ENCODE measurements at regions of chr2 and their contacts with region 1.

Region 1: DNA sequence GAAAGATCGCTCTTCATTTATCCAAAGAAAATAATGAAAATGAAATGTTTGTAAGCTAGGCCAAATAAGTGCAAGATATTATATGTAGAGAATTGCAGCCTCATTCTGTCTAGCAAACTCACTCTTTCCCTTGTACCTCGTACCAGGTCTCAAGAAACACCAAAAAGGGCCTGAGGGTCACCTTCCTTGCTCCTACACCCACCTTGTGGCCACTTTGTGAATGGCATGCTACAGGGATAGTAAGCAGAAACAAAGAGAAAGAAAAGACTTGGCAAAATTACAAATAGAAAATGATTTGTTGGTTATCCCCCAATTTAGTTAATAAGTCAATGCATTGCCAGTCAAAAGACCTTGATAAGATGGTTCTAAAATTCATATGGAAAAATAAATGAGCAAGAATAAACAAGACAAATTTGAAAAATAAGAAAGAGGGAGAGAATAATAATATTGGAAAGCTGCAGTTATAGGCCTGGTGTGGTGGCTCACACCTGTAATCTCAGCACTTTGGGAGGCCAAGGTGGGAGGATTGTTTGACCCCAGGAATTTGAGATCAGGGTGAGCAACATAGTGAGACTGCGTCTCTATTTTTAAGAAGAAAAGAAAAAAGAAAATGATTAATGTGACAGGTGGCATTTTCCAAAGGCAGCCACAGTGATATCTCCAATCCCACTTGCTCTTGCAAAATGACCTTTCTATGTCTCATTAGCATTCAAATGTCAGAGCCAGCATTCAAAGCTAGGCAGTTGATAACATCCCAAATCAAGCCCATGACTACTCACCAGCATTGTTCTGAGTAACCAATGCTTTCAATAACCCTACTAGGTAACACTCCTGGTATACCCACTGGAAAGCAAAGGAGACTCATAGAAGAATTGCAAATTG is 38.8 kb upstream of the BMP10 start:
- DNase-seq: peak; percentile 83
- ATAC-seq: peak; percentile 46
- H3K4me3 ChIP-seq: no peak overlapping the region
- H3K4me3 Mint-ChIP-seq: no peak overlapping the region
- H3K27ac ChIP-seq: no peak overlapping the region
- H3K27ac Mint-ChIP-seq: peak overlapping the region; percentile 62
- H3K4me1 ChIP-seq: peaks cover 24 to 29% of the 10 kb centered on the region in 2 donors
- H3K4me1 Mint-ChIP-seq: peaks cover 28% of the 10 kb centered on the region
- H3K27me3 ChIP-seq: no peaks in the 10 kb centered on the region
- H3K27me3 Mint-ChIP-seq: no peaks in the 10 kb centered on the region
- CTCF ChIP-seq: peak; percentile 95

Region 2: DNA sequence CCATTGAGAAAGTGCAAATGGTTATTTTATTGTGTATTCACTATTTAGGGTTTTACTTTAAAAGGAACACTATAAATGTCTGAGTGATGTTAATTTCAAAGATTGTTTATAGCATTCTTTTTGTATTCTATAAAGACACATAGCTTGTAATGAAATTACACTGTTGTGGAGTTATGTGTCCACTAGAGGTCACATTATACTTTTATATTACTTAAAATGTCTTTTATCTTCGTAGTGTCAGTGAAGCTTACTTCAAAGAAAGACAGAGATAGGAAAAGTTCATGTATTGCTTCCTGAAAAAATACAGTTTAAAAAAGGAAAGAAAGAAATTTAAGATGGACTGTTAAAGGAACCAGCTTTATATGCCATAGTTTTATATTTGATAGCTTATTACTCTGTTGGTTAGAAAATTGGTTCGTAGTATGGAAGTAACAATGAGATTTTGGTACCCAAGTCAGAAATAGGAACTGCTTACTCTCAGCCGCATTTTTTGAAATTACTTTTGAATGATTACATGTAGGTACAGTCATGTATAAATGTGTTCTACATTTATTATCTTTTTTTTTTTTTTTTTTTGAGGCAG is 422.2 kb before region 1 on chr2:
- CTCF ChIA-PET with region 1: interaction called, 43 read pairs
- POLR2A ChIA-PET with region 1: no interaction called
- intact Hi-C with region 1: no loop called
- DNase-seq: peak; percentile 50
- ATAC-seq: no peak
- H3K4me3 ChIP-seq: no peak overlapping the region
- H3K4me3 Mint-ChIP-seq: no peak overlapping the region
- H3K27ac ChIP-seq: no peak overlapping the region
- H3K27ac Mint-ChIP-seq: no peak overlapping the region
- H3K4me1 ChIP-seq: peaks cover 0 to 2% of the 10 kb centered on the region in 2 donors
- H3K4me1 Mint-ChIP-seq: peaks cover 4% of the 10 kb centered on the region
- H3K27me3 ChIP-seq: no peaks in the 10 kb centered on the region
- H3K27me3 Mint-ChIP-seq: no peaks in the 10 kb centered on the region
- CTCF ChIP-seq: peak; percentile 76

Region 3: GRCh38 chr2:68715353-68716041 is 194.5 kb before region 1 on chr2:
- CTCF ChIA-PET with region 1: interaction called, 133 read pairs
- POLR2A ChIA-PET with region 1: interaction called, 5 read pairs
- intact Hi-C with region 1: no loop called
- DNase-seq: peak; percentile 70
- ATAC-seq: peak; percentile 37
- H3K4me3 ChIP-seq: peak overlapping the region in 1 of 5 experiments; percentile 17
- H3K4me3 Mint-ChIP-seq: peak overlapping the region; percentile 33
- H3K27ac ChIP-seq: peak overlapping the region; percentile 59 to 78
- H3K27ac Mint-ChIP-seq: peak overlapping the region; percentile 83
- H3K4me1 ChIP-seq: peaks cover 45 to 50% of the 10 kb centered on the region in 2 donors
- H3K4me1 Mint-ChIP-seq: peaks cover 69% of the 10 kb centered on the region
- H3K27me3 ChIP-seq: no peaks in the 10 kb centered on the region
- H3K27me3 Mint-ChIP-seq: no peaks in the 10 kb centered on the region
- CTCF ChIP-seq: peak; percentile 57

Region 4: GRCh38 chr2:68742626-68743415 is 167.2 kb before region 1 on chr2:
- CTCF ChIA-PET with region 1: interaction called, 11 read pairs
- POLR2A ChIA-PET with region 1: interaction called, 3 read pairs
- intact Hi-C with region 1: no loop called
- DNase-seq: peak; percentile 69
- ATAC-seq: peak; percentile 64
- H3K4me3 ChIP-seq: peak overlapping the region in 3 of 5 experiments; percentile 27 to 53 (median 34)
- H3K4me3 Mint-ChIP-seq: peak overlapping the region; percentile 70
- H3K27ac ChIP-seq: peak overlapping the region; percentile 69 to 72
- H3K27ac Mint-ChIP-seq: peak overlapping the region; percentile 78
- H3K4me1 ChIP-seq: peaks cover 79 to 86% of the 10 kb centered on the region in 2 donors
- H3K4me1 Mint-ChIP-seq: peaks cover 90% of the 10 kb centered on the region
- H3K27me3 ChIP-seq: no peaks in the 10 kb centered on the region
- H3K27me3 Mint-ChIP-seq: no peaks in the 10 kb centered on the region
- CTCF ChIP-seq: no peak

Region 5: GRCh38 chr2:68774569-68775271 is 135.3 kb before region 1 on chr2:
- CTCF ChIA-PET with region 1: interaction called, 48 read pairs
- POLR2A ChIA-PET with region 1: interaction called, 3 read pairs
- intact Hi-C with region 1: loop called (anchors 5 kb)
- DNase-seq: peak; percentile 91
- ATAC-seq: peak; percentile 80
- H3K4me3 ChIP-seq: peak overlapping the region; percentile 79 to 96 (median 91)
- H3K4me3 Mint-ChIP-seq: peak overlapping the region; percentile 99
- H3K27ac ChIP-seq: peak overlapping the region; percentile 93 to 99
- H3K27ac Mint-ChIP-seq: peak overlapping the region; percentile 98
- H3K4me1 ChIP-seq: peaks cover 83 to 88% of the 10 kb centered on the region in 2 donors
- H3K4me1 Mint-ChIP-seq: peaks cover 80% of the 10 kb centered on the region
- H3K27me3 ChIP-seq: no peaks in the 10 kb centered on the region
- H3K27me3 Mint-ChIP-seq: no peaks in the 10 kb centered on the region
- CTCF ChIP-seq: no peak

Region 6: DNA sequence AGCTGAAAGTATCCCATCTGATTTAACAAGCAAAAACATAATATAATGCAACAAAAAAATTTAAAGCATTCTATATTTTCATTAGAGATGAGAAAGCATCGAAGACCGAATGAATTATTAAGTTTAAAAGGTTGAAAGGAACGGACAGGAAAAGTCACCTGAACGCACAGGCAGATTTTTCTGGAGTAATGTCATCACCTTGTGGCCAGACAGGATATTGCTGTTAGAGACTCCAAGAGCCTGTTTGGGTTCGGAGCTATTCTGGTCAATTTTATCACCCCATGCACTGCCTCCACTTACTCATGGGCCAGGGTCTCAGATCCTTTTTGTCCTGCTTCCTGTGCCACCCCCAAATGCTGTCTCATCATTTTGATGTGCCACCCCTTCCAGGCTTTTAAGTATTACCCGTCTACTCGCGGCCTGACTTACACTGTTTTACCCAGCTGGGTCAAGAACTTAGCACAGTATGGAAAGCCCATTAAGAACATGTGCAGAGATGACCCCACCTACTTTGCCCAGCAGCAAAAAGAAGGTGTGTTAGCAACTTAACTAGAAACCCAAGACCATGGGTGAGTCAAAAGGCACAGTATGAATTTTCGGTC is 15.4 kb after region 1 on chr2:
- CTCF ChIA-PET with region 1: interaction called, 15 read pairs
- POLR2A ChIA-PET with region 1: no interaction called
- intact Hi-C with region 1: no loop called
- DNase-seq: peak; percentile 76
- ATAC-seq: peak; percentile 56
- H3K4me3 ChIP-seq: no peak overlapping the region
- H3K4me3 Mint-ChIP-seq: no peak overlapping the region
- H3K27ac ChIP-seq: no peak overlapping the region
- H3K27ac Mint-ChIP-seq: no peak overlapping the region
- H3K4me1 ChIP-seq: no peaks in the 10 kb centered on the region
- H3K4me1 Mint-ChIP-seq: no peaks in the 10 kb centered on the region
- H3K27me3 ChIP-seq: no peaks in the 10 kb centered on the region
- H3K27me3 Mint-ChIP-seq: peaks cover 4% of the 10 kb centered on the region
- CTCF ChIP-seq: peak; percentile 95

Region 7: DNA sequence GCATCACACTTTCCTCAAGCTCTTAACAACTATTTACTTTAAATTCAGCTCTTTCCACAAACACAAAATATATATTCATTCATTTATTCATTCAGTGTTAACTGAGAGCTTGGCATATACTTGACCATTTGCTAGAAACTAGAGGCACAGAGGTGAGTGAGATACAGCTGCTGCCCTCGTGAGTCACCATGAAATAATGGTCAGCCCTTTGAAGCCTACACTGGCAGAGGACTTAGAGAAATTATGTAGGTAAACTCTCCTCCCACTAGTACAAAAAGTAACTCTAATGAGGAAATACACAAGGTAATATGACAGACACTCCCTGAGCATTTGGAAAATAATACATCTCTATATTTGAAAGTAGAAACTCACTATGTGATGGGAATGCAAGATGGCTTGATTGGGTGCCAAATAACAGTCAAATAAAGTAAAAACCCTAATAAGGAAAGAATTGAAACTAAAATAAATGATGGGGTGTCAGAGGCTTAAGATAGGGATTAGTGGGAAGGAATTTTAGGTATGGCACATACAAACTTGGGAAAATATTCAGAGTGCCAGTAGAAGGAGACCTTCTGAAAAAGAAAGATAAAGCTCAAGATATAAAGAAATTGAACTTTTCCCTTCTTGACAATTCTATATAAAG is 164.0 kb after region 1 on chr2:
- CTCF ChIA-PET with region 1: no interaction called
- POLR2A ChIA-PET with region 1: no interaction called
- intact Hi-C with region 1: no loop called
- DNase-seq: no peak
- ATAC-seq: no peak
- H3K4me3 ChIP-seq: no peak overlapping the region
- H3K4me3 Mint-ChIP-seq: no peak overlapping the region
- H3K27ac ChIP-seq: no peak overlapping the region
- H3K27ac Mint-ChIP-seq: no peak overlapping the region
- H3K4me1 ChIP-seq: no peaks in the 10 kb centered on the region
- H3K4me1 Mint-ChIP-seq: no peaks in the 10 kb centered on the region
- H3K27me3 ChIP-seq: no peaks in the 10 kb centered on the region
- H3K27me3 Mint-ChIP-seq: peaks cover 14% of the 10 kb centered on the region
- CTCF ChIP-seq: no peak

Measured in B cell (primary cell).